WTC11 (cell line): ENCODE measurements at regions of chr9 and their contacts with region 1.

Region 1: DNA sequence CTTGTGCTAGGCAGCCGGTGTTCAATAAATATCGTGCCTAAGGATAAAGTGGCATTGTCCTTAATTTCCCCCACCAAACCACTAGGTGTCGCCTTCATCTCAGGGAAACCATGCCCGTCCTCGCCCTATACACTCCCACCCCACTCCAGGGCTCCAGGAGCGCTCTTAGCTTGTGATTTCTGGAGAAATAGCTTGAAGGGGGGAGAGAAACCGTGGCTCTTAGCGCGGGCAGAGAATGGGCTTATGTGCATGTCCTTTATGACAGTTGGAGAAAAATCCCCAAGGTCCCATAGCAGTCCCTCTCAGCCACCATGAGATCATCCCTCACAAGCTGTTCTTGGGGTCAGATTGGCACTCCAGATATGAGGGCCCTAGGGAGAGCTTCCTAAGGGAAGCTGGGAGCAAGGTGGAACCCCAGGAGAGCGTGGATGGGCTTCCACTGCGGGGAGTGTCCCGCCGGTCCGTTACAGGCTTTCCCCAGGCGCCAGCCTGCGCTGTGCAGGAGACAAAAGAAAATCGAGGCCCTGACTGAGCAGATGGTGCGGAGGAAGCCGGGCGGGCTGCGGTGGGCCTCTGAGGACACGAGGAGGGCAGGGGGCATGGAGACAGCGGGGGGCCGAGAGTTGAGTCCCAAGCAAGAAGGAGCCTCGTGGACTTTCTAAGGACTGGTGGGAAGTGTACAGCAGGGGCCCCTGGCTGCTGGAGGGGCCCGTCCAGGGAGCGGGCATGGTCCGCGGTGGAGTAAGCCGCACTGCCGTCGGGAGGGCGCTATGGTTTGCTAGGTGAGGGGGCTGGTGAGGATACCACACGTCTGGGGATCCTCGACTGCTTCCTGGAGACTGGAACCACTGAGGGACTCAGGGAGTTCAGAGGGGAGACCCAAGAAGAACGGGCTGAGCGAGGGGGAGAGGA is 750 bp upstream of the NPR2 start:
- DNase-seq: peak; percentile 69
- ATAC-seq: peak; percentile 84
- H3K4me3 Mint-ChIP-seq: peak overlapping the region; percentile 90
- H3K27ac Mint-ChIP-seq: no peak overlapping the region; the same call in 1 of the 2 replicates
- H3K4me1 Mint-ChIP-seq: peaks cover 11% of the 10 kb centered on the region
- H3K27me3 Mint-ChIP-seq: peaks cover 3% of the 10 kb centered on the region; the same call in 1 of the 2 replicates
- CTCF ChIP-seq: peak; percentile 67

Region 2: GRCh38 chr9:35696525-35697215 is 94.0 kb before region 1 on chr9:
- CTCF ChIA-PET with region 1: interaction called, 11 read pairs
- POLR2A ChIA-PET with region 1: interaction called, 3 read pairs
- DNase-seq: peak; percentile 81
- ATAC-seq: peak; percentile 97
- H3K4me3 Mint-ChIP-seq: no peak overlapping the region
- H3K27ac Mint-ChIP-seq: 0 out of 2 replicates have a peak overlapping the region, but pooled peaks have one; percentile 72
- H3K4me1 Mint-ChIP-seq: peaks cover 4% of the 10 kb centered on the region
- H3K27me3 Mint-ChIP-seq: no peaks in the 10 kb centered on the region
- CTCF ChIP-seq: peak; percentile 85

Region 3: DNA sequence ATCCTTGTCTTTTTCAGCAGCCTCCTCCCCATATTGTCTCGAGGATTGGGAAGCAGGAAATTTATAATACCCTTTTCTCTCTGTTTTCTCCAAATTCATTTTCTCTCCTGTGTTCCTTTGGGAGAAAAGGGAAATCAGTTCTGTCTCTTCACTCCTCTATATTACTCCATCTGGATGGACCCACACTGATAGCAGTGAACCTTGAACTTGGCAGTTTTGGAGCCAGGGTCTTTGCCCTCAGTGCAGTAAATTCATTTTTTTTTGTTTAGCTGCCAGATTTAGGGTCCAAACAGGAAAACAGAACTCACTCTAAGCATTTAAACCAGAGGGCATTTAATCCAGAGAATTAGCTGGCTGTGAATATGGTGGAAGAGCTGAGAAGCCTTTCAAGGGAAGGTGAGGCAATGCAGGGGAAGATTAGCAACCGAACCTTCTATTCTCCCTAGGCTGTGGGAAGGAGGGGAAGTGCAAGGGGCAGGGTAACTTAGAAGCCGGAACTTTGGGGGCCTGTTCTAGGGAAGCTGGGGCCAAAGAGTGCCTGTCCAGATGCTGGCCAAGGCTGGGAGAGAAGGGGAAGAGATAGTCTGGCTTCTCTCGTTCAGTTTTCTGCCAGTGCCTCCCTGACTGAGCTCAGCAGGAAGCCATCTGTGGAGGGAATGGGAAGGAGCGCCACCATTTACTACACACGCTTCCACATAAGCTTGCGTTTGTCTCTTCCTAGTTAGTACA is 15.6 kb before region 1 on chr9:
- CTCF ChIA-PET with region 1: interaction called, 40 read pairs
- POLR2A ChIA-PET with region 1: no interaction called
- DNase-seq: peak; percentile 16
- ATAC-seq: peak; percentile 59
- H3K4me3 Mint-ChIP-seq: no peak overlapping the region
- H3K27ac Mint-ChIP-seq: peak overlapping the region; percentile 8
- H3K4me1 Mint-ChIP-seq: peaks cover 18% of the 10 kb centered on the region
- H3K27me3 Mint-ChIP-seq: no peaks in the 10 kb centered on the region
- CTCF ChIP-seq: no peak

Region 4: GRCh38 chr9:35835216-35835632 is 44.6 kb after region 1 on chr9:
- CTCF ChIA-PET with region 1: interaction called, 59 read pairs
- POLR2A ChIA-PET with region 1: no interaction called
- DNase-seq: peak; percentile 52
- ATAC-seq: peak; percentile 90
- H3K4me3 Mint-ChIP-seq: no peak overlapping the region
- H3K27ac Mint-ChIP-seq: no peak overlapping the region
- H3K4me1 Mint-ChIP-seq: peaks cover 19% of the 10 kb centered on the region
- H3K27me3 Mint-ChIP-seq: peaks cover 21% of the 10 kb centered on the region
- CTCF ChIP-seq: peak; percentile 31; the same call in 1 of the 2 replicates

Region 5: GRCh38 chr9:35891646-35892045 is 101.0 kb after region 1 on chr9:
- CTCF ChIA-PET with region 1: interaction called, 14 read pairs
- POLR2A ChIA-PET with region 1: no interaction called
- DNase-seq: no peak
- ATAC-seq: no peak
- H3K4me3 Mint-ChIP-seq: no peak overlapping the region
- H3K27ac Mint-ChIP-seq: no peak overlapping the region
- H3K4me1 Mint-ChIP-seq: no peaks in the 10 kb centered on the region
- H3K27me3 Mint-ChIP-seq: no peaks in the 10 kb centered on the region; the same call in 1 of the 2 replicates
- CTCF ChIP-seq: no peak

Region 6: DNA sequence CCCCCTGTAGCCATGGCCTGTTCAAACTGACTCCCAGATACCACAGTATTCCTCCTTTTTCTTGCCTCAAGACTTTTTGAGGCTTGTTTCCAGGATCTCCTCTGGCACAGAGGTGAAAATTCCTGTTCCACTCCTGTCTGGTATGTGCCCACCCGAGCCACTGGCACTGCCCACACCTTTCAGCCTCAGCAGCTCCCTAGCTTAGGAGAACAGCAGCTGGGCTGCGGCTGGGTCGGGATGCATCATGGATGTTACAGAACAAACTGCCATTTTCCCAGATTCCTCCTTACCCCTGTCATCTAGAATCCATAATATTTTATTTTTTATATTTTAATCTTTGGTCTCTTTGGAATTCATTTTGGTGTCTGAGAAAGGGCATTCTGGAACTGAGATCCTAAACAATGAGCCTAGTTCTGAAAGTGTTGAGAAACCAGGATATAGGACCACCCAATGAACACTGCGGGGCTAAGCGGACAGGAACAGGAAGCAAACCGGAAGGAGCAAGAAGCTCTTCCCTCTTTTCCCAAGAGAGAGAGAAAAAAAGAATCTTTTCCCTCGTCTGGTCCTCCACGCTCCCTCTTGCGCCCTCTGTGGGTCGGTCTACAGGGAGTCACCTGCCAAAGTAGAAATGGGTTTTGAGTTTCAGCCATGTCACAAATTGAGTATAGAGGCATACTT is 154.8 kb after region 1 on chr9:
- CTCF ChIA-PET with region 1: interaction called, 15 read pairs
- POLR2A ChIA-PET with region 1: no interaction called
- DNase-seq: peak; percentile 85
- ATAC-seq: peak; percentile 84
- H3K4me3 Mint-ChIP-seq: peak overlapping the region; percentile 57
- H3K27ac Mint-ChIP-seq: no peak overlapping the region; the same call in 1 of the 2 replicates
- H3K4me1 Mint-ChIP-seq: peaks cover 8% of the 10 kb centered on the region; the same call in 1 of the 2 replicates
- H3K27me3 Mint-ChIP-seq: peaks cover 71% of the 10 kb centered on the region
- CTCF ChIP-seq: peak; percentile 56